ENCODE measurements at regions of chr7 and their contacts with region 1.

Region 1: GRCh38 chr7:1223196-1223981 is 9.3 kb upstream of the UNCX start:
- DNase-seq: peak; percentile 45
- H3K4me3 Mint-ChIP-seq: no peak overlapping the region
- H3K27ac Mint-ChIP-seq: no peak overlapping the region
- H3K4me1 Mint-ChIP-seq: no peaks in the 10 kb centered on the region
- H3K27me3 Mint-ChIP-seq: peaks cover 100% of the 10 kb centered on the region
- CTCF ChIP-seq: no peak

Region 2: DNA sequence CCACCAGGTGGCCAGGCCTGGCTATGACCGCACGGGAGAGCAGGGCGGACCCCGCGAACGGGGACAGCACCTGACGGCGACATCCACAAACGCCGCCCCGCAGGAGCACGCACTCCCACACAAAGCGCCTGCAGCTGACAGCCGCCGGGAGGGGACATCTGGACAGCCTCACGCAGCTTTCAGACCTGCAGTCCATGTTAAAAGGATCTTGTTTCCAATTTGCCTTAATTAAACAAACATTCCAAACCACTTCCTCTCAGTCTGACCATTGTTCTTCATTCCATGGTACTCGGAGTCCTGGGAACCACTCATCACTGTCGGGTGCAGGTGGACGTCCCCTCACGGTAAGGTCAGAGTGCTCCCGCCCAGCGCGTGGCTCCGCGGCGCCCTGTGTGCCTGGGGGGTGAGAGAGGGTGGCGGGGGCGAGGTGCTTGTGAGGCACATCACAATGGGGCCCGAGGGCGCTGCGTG is 141.4 kb before region 1 on chr7:
- CTCF ChIA-PET with region 1: no interaction called
- intact Hi-C with region 1: no loop called
- DNase-seq: no peak
- H3K4me3 Mint-ChIP-seq: no peak overlapping the region
- H3K27ac Mint-ChIP-seq: no peak overlapping the region
- H3K4me1 Mint-ChIP-seq: peaks cover 5% of the 10 kb centered on the region
- H3K27me3 Mint-ChIP-seq: no peaks in the 10 kb centered on the region
- CTCF ChIP-seq: no peak

Region 3: DNA sequence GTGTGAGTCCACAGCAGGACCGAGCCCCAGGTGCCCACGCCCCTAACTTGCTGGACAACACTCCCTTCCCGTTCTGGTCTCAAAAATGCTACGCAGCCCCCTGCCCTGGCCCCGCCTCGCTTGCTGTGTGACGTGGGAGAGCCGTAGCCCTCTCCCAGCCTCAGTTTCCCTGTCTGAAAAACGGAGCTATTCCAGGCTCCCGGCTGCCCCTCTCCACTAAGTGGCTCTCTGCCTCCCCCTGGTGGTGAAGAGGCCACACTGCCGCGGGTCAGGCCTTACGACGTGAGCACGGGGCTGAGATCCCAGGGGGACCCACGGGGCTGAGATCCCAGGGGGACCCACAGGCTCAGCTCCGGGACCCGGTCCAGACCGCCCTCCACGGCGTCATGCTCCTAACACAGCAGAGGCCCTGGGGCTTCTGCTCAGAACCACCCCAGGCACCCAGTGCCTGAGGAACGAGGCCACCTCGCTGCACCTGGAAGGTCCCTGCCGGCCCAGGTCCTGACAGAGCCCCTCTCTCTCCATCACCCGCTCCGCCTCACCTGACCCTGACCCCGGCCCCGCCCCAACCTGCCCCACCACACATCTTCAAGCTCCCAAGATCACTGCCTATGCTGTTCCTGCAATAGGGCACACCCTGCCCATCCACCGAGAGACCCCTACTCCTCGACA is 209.2 kb after region 1 on chr7:
- CTCF ChIA-PET with region 1: interaction called, 4 read pairs
- intact Hi-C with region 1: loop called (anchors 1 kb)
- DNase-seq: peak; percentile 90
- H3K4me3 Mint-ChIP-seq: no peak overlapping the region
- H3K27ac Mint-ChIP-seq: peak overlapping the region; percentile 0
- H3K4me1 Mint-ChIP-seq: no peaks in the 10 kb centered on the region
- H3K27me3 Mint-ChIP-seq: peaks cover 16% of the 10 kb centered on the region
- CTCF ChIP-seq: peak; percentile 100

Measured in Calu3 (cell line).